ENCODE measurements at regions of chr16 and their contacts with region 1.

Region 1: GRCh38 chr16:24041826-24042631 is 206.2 kb downstream of the PRKCB start:
- DNase-seq: peak; percentile 87
- ATAC-seq: peak; percentile 94
- H3K4me3 Mint-ChIP-seq: no peak overlapping the region
- H3K27ac Mint-ChIP-seq: no peak overlapping the region
- H3K4me1 Mint-ChIP-seq: peaks cover 7% of the 10 kb centered on the region
- H3K27me3 Mint-ChIP-seq: no peaks in the 10 kb centered on the region

Region 2: DNA sequence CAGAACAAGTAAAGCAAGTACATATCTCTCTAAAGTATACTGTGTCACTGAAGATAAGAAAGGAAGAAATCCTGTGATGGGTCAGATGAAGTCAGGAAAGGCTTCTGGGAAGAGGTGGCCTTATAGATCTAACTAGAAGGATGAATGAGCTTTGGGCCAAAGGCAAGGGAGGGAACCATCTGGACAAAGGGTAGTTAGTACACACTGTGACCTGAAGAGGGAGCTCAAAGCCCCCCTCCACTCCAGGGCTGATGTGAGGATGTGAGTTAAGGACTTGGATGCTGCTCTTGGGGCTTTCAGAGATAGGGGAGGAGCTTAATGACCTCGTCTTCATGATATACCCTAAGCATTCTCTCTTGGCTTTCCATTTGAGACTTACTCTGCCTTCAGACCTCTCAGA is 28.8 kb after region 1 on chr16:
- CTCF ChIA-PET with region 1: interaction called, 17 read pairs
- DNase-seq: peak; percentile 63
- ATAC-seq: peak; percentile 80
- H3K4me3 Mint-ChIP-seq: no peak overlapping the region
- H3K27ac Mint-ChIP-seq: peak overlapping the region; percentile 8
- H3K4me1 Mint-ChIP-seq: peaks cover 30% of the 10 kb centered on the region
- H3K27me3 Mint-ChIP-seq: no peaks in the 10 kb centered on the region

Region 3: DNA sequence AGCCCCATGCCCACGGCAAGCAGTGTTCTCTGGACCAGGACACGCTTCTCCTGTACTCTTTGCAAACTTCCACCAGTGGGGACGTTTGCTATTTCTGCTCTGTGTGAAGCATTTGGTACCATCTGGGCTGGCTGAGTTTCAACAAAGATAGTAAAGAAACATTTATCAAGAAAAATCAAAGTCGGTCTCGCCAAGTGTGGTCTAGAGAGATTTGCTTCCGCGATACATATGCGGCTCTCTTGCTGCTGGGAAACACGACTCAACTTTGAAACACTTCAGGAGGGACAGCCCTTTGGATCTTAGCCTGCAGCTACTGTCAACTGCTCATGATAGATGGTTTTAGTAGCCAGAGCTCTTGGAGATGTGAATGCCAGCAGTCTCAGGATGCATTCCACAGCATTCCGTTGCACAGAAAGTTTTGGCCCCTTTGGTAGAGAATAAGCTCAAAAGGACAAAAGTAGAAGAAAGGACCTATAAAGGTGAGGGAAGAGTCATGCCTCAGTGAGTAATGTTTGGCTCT is 45.9 kb after region 1 on chr16:
- CTCF ChIA-PET with region 1: no interaction called
- DNase-seq: no peak
- ATAC-seq: no peak
- H3K4me3 Mint-ChIP-seq: no peak overlapping the region
- H3K27ac Mint-ChIP-seq: no peak overlapping the region
- H3K4me1 Mint-ChIP-seq: peaks cover 17% of the 10 kb centered on the region
- H3K27me3 Mint-ChIP-seq: no peaks in the 10 kb centered on the region

Region 4: GRCh38 chr16:24353622-24354021 is 311.6 kb after region 1 on chr16:
- CTCF ChIA-PET with region 1: no interaction called
- DNase-seq: no peak
- ATAC-seq: no peak
- H3K4me3 Mint-ChIP-seq: no peak overlapping the region
- H3K27ac Mint-ChIP-seq: no peak overlapping the region
- H3K4me1 Mint-ChIP-seq: no peaks in the 10 kb centered on the region
- H3K27me3 Mint-ChIP-seq: peaks cover 4% of the 10 kb centered on the region

Measured in activated CD8-positive, alpha-beta memory T cell treated with anti-CD3 and anti-CD28 coated beads, Interleukin-2, amount 10 ng/mL, durations not matched to agents 7 days and 5 days (primary cell).